Mammary epithelial cell (primary cell): ENCODE measurements at regions of chr5 and their contacts with region 1.

Region 1: GRCh38 chr5:142000703-142001484 is 11.9 kb downstream of the GNPDA1 start:
- DNase-seq: no peak
- H3K4me3 ChIP-seq: no peak overlapping the region
- H3K27ac ChIP-seq: no peak overlapping the region
- H3K4me1 ChIP-seq: peaks cover 17% of the 10 kb centered on the region
- H3K27me3 ChIP-seq: no peaks in the 10 kb centered on the region
- CTCF ChIP-seq: peak; percentile 27 to 40

Region 2: GRCh38 chr5:142134331-142135010 is 133.6 kb after region 1 on chr5:
- CTCF ChIA-PET with region 1: no interaction called
- dilution Hi-C with region 1: loop called (anchors 5 kb)
- in situ Hi-C with region 1: no loop called
- intact Hi-C with region 1: no loop called
- DNase-seq: no peak
- H3K4me3 ChIP-seq: no peak overlapping the region
- H3K27ac ChIP-seq: no peak overlapping the region
- H3K4me1 ChIP-seq: no peaks in the 10 kb centered on the region
- H3K27me3 ChIP-seq: no peaks in the 10 kb centered on the region
- CTCF ChIP-seq: no peak